H1 (cell line): ENCODE measurements at regions of chr7 and their contacts with region 1.

Region 1: DNA sequence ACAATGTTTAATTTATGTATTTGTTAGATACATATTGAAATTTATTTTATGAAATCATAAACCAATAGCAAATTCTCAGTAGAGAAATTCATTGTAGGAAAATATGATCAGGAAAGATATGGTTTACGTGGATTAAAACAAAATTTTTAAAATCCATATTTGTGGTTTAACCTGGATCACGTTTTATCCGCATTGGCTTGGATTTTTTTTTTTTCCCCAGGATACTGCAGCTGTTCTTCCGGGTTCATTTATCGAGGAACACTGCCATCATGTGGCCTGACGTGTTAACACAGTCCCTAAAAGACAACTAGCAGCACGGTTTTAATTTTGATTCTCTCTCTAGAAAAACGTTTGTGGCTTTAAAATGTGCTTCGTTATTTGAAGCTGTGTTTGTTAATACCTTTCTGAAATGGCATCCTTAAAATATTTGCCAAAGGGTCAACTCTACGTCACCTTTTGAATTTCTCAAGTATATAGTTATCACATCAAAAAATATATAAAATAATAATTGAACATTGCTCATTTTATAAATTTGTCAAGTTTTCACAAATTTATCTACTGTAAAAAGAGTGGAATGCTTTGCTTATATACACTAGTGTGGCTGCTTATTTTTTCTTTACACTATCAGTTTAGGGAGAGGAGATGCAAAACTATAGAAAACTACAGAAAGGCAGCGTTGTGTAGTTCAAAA is 8.7 kb upstream of the ASB4 start:
- DNase-seq: no peak
- H3K4me3 ChIP-seq: no peak overlapping the region
- H3K27ac ChIP-seq: no peak overlapping the region
- H3K4me1 ChIP-seq: no peaks in the 10 kb centered on the region
- H3K27me3 ChIP-seq: no peaks in the 10 kb centered on the region
- CTCF ChIP-seq: peak in 2 of 3 experiments; percentile 70 to 71; a peak in 3 of 4 replicates
- EP300 ChIP-seq: no peak
- POLR2A ChIP-seq: no peak
- RAD21 ChIP-seq: peak; percentile 92 to 94

Region 2: DNA sequence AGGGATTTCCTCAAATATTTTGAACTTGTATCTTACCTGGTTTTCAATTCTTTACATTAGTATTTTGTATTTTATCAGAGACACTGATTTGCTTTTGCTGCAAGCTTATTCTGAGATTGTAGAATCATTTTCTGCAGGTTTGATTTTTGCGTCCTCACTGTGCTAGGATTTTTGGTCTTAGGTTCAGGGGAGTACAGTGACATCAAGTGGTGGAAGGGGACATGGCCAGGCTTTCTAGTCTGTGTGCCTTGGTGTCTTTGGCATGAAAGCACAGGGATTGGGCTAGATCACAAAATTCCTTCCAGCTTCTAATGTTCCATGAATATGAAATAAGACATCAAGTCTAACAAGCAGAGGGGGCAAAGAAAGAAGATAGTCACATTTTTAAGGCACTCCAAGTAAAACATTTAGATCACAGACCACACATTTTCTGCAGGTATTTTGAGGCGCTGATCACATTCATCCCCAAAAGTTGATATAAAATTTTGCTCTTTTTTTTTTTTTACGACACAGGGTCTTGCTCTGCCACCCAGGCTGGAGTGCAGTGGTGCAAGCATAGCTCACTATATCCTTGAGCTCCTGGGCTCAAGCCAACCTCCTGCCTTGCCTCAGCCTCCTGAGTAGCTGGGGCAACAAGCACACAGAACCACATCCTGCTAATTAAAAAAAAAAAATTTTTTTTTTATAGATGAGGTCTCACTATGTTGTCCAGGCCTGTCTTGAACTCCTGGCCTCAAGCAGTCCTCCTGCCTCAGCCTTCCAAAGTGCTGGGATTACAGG is 277.1 kb before region 1 on chr7:
- CTCF ChIA-PET with region 1: interaction called, 10 read pairs
- POLR2A ChIA-PET with region 1: no interaction called
- DNase-seq: no peak
- H3K4me3 ChIP-seq: no peak overlapping the region
- H3K27ac ChIP-seq: no peak overlapping the region
- H3K4me1 ChIP-seq: no peaks in the 10 kb centered on the region
- H3K27me3 ChIP-seq: no peaks in the 10 kb centered on the region
- CTCF ChIP-seq: peak; percentile 51 to 73 (median 53)
- EP300 ChIP-seq: no peak
- POLR2A ChIP-seq: no peak
- RAD21 ChIP-seq: peak; percentile 84 to 86

Region 3: GRCh38 chr7:95246831-95247370 is 230.1 kb before region 1 on chr7:
- CTCF ChIA-PET with region 1: interaction called, 11 read pairs
- POLR2A ChIA-PET with region 1: no interaction called
- DNase-seq: peak; percentile 15 to 51
- H3K4me3 ChIP-seq: peak overlapping the region in 1 of 4 experiments; percentile 24; a peak in 1 of 8 replicates
- H3K27ac ChIP-seq: no peak overlapping the region
- H3K4me1 ChIP-seq: peaks cover 0 to 6% (median 0%) of the 10 kb centered on the region in 4 experiments; a peak in 4 of 7 replicates
- H3K27me3 ChIP-seq: peaks cover 0 to 1% (median 0%) of the 10 kb centered on the region in 4 experiments; a peak in 1 of 7 replicates
- CTCF ChIP-seq: peak; percentile 35 to 86 (median 73)
- EP300 ChIP-seq: no peak
- POLR2A ChIP-seq: no peak
- RAD21 ChIP-seq: peak; percentile 87 to 88

Region 4: GRCh38 chr7:95263785-95264575 is 213.1 kb before region 1 on chr7:
- CTCF ChIA-PET with region 1: interaction called, 14 read pairs
- POLR2A ChIA-PET with region 1: no interaction called
- DNase-seq: no peak
- H3K4me3 ChIP-seq: no peak overlapping the region
- H3K27ac ChIP-seq: no peak overlapping the region
- H3K4me1 ChIP-seq: peaks cover 0 to 5% (median 0%) of the 10 kb centered on the region in 4 experiments; a peak in 2 of 7 replicates
- H3K27me3 ChIP-seq: no peaks in the 10 kb centered on the region
- CTCF ChIP-seq: no peak
- EP300 ChIP-seq: no peak
- POLR2A ChIP-seq: no peak
- RAD21 ChIP-seq: no peak

Region 5: DNA sequence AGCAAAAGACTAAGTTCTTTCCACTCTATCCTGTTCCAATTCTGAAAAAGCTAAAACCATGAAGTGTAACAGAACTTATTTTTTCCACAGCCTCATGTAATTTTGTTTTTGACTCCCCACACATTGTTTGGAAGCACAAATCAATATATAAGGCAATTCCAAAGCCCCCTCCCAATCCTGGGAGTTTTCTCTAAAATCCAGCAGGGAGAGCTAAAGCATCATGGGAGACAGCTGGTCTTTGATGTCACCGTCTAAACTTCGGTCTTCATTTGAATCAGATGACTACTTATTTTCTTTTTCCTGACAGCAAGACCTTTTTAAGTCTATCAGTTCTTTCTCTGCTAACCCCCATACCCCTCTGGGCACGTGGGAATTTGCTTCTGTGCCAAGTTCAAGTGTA is 119.4 kb before region 1 on chr7:
- CTCF ChIA-PET with region 1: interaction called, 18 read pairs
- POLR2A ChIA-PET with region 1: no interaction called
- DNase-seq: no peak
- H3K4me3 ChIP-seq: no peak overlapping the region
- H3K27ac ChIP-seq: no peak overlapping the region
- H3K4me1 ChIP-seq: no peaks in the 10 kb centered on the region
- H3K27me3 ChIP-seq: no peaks in the 10 kb centered on the region
- CTCF ChIP-seq: no peak
- EP300 ChIP-seq: no peak
- POLR2A ChIP-seq: no peak
- RAD21 ChIP-seq: peak; percentile 52 to 55

Region 6: GRCh38 chr7:95396136-95397032 is 80.7 kb before region 1 on chr7 and contains the start of gene PON3:
- CTCF ChIA-PET with region 1: interaction called, 11 read pairs
- POLR2A ChIA-PET with region 1: no interaction called
- DNase-seq: peak in 1 of 2 experiments; percentile 56
- H3K4me3 ChIP-seq: peak within 1 kb of the TSS in 1 of 4 experiments; percentile 22; a peak in 1 of 8 replicates
- H3K27ac ChIP-seq: no peak within 1 kb of the TSS
- H3K4me1 ChIP-seq: no peaks in the 10 kb centered on the region; a peak in 1 of 7 replicates
- H3K27me3 ChIP-seq: no peaks in the 10 kb centered on the region
- CTCF ChIP-seq: peak; percentile 35 to 58 (median 55)
- EP300 ChIP-seq: no peak
- POLR2A ChIP-seq: no peak
- RAD21 ChIP-seq: peak; percentile 19 to 41; a peak in 3 of 4 replicates
- total RNA-seq, gene PON3: not detected in 2 replicates

Region 7: DNA sequence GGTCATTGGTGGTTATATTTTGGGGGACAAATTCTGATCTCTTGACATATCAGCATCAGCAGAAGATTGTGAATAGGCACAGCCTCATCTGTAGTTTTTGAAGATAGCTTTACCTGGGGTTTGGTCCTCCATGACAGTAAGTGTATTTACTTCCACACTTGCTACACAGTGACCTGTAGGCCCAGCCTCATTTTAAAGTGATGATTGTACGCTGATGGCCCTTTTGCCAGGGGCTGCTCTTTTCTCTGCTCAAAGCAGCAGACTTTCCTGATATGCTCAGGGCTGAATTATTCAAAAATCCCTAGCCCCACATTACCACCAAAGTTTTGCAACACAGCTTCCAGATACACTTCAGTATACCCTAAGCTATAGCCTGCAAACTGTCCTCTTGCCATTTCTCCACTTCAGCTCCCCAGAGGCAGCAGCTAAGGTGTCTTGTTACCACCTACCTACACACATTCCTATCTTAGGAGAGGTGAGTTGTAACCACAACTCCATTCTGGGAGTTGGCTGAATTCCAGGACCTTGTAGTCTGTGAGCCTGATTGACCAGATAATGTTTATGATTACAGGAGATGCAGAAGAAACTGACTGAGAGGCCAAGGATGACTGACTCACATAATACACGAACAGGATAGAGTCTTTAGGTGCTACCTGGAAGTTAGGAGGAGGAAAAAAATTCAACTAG is 14.7 kb after region 1 on chr7:
- CTCF ChIA-PET with region 1: interaction called, 55 read pairs
- POLR2A ChIA-PET with region 1: no interaction called
- DNase-seq: no peak
- H3K4me3 ChIP-seq: no peak overlapping the region
- H3K27ac ChIP-seq: no peak overlapping the region
- H3K4me1 ChIP-seq: peaks cover 4 to 8% (median 6%) of the 10 kb centered on the region in 4 experiments; a peak in 4 of 7 replicates
- H3K27me3 ChIP-seq: no peaks in the 10 kb centered on the region
- CTCF ChIP-seq: no peak
- EP300 ChIP-seq: no peak
- POLR2A ChIP-seq: no peak
- RAD21 ChIP-seq: no peak